MCF 10A (cell line): ENCODE measurements at regions of chr6 and their contacts with region 1.

Region 1: DNA sequence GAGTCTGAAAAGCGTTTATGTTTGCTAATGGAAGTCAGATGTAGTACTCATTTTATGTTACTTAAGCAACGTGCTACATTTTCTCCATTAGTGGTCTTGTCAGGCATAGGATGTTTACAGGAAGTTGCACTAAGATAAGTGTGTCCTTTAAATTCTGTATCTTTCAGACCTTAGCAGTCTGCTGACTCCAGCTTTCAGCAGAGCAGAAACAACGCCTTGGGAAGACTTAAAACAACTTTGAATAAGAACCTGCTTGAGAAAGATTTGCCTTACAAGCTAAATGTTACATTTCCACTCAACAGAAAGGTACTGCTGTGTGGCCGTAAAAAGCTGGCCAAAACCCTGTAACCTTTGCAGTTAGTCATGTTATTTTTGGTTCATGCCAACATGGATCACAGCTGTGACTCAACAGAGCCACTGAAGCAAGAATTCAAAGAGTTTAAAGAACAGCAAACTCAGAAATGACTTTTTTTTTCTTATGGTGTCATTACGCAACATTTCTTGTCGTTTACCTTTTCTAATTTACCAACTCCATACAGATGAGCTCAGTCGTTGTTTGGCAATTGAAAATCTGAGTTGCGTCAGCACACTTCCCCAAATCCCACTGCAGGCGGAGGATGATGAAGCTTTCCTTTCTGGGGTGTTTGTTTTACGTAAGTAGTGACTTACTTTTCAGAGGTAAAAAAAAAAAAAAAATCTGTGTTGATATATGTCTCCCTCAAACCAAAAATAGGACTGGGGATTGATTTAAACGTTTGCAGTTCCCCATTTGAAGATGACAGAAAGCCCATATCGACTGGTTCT is 27.9 kb upstream of the BMP6 start:
- DNase-seq: peak; percentile 96
- H3K4me3 Mint-ChIP-seq: peak overlapping the region; percentile 59
- H3K27ac Mint-ChIP-seq: peak overlapping the region; percentile 87
- H3K4me1 Mint-ChIP-seq: peaks cover 16% of the 10 kb centered on the region
- H3K27me3 Mint-ChIP-seq: no peaks in the 10 kb centered on the region
- CTCF ChIP-seq: no peak

Region 2: GRCh38 chr6:7505187-7505811 is 192.7 kb before region 1 on chr6:
- CTCF ChIA-PET with region 1: no interaction called
- POLR2A ChIA-PET with region 1: no interaction called
- intact Hi-C with region 1: no loop called
- DNase-seq: peak; percentile 99
- H3K4me3 Mint-ChIP-seq: peak overlapping the region; percentile 33
- H3K27ac Mint-ChIP-seq: peak overlapping the region; percentile 95
- H3K4me1 Mint-ChIP-seq: peaks cover 26% of the 10 kb centered on the region
- H3K27me3 Mint-ChIP-seq: no peaks in the 10 kb centered on the region
- CTCF ChIP-seq: no peak

Region 3: DNA sequence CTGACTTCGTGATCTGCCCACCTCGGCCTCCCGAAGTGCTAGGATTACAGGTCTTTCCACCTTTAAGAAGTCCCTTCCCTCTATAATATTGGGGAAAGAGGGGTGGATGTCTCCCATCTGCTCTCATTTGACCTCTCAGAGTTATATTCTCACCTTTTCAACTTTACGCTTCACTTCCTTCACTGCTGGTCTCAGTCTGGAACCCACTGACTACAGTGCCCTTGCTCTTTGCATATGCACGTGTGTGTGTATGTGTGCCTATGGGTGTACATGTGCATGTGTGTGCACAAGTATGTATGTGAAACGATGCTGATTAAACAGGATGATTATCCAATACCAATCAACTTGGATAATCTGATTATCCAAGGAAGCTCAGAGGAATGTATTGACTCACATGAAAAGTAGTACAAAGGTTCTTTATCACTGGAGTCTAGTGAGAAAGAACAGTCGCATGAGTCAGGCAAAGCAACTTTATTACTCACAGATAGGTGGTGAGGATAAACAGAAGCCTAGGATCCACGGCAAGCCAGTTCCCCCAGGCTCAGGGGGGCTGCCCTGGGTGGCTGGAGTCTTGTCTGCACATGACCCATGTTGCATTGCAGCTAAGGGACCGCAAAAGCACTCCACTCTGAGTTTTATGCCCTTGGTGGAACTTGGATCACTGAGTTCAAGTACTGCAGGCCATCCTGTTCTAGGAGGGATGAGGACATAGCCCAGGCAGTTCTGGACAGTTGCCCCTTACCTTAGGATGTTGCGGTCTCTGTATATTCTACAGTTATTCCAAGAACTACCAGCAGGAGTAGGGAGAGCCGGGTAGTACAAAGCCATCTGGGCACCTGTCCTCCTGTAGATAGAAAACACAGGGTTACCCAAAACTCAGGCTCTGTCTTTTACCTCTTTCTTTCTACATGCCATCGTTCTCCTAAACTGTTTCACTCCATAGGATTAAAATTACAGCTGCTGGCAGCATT is 57.1 kb before region 1 on chr6:
- CTCF ChIA-PET with region 1: interaction called, 4 read pairs
- POLR2A ChIA-PET with region 1: interaction called, 3 read pairs
- intact Hi-C with region 1: loop called (anchors 10 kb)
- DNase-seq: peak; percentile 52
- H3K4me3 Mint-ChIP-seq: no peak overlapping the region
- H3K27ac Mint-ChIP-seq: no peak overlapping the region
- H3K4me1 Mint-ChIP-seq: peaks cover 15% of the 10 kb centered on the region
- H3K27me3 Mint-ChIP-seq: no peaks in the 10 kb centered on the region
- CTCF ChIP-seq: no peak

Region 4: DNA sequence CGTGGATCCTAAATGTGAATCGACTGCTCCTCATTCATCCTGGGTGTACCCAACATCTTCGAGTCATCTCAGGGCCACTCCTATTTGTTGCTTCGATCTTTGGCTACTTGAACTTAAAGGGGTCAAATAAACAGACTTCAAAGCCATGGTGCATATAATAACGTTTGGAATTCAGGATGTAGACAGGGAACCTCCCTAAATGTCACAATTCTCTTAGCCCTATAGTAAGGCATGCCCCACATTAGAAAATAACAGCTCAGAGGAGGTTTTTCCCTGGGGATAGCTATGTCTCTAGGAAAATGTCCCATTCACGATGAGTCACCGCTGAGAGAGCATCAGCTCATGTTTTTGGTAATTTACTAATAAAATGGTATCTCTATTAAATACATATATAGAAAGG is 26.9 kb before region 1 on chr6:
- CTCF ChIA-PET with region 1: interaction called, 4 read pairs
- POLR2A ChIA-PET with region 1: interaction called, 10 read pairs
- intact Hi-C with region 1: no loop called
- DNase-seq: peak; percentile 61
- H3K4me3 Mint-ChIP-seq: no peak overlapping the region
- H3K27ac Mint-ChIP-seq: no peak overlapping the region
- H3K4me1 Mint-ChIP-seq: peaks cover 22% of the 10 kb centered on the region
- H3K27me3 Mint-ChIP-seq: no peaks in the 10 kb centered on the region
- CTCF ChIP-seq: no peak

Region 5: GRCh38 chr6:7794509-7794908 is 96.5 kb after region 1 on chr6:
- CTCF ChIA-PET with region 1: no interaction called
- POLR2A ChIA-PET with region 1: no interaction called
- intact Hi-C with region 1: no loop called
- DNase-seq: no peak
- H3K4me3 Mint-ChIP-seq: no peak overlapping the region
- H3K27ac Mint-ChIP-seq: no peak overlapping the region
- H3K4me1 Mint-ChIP-seq: no peaks in the 10 kb centered on the region
- H3K27me3 Mint-ChIP-seq: peaks cover 35% of the 10 kb centered on the region
- CTCF ChIP-seq: no peak

Region 6: GRCh38 chr6:7813704-7814103 is 115.7 kb after region 1 on chr6:
- CTCF ChIA-PET with region 1: no interaction called
- POLR2A ChIA-PET with region 1: no interaction called
- intact Hi-C with region 1: no loop called
- DNase-seq: no peak
- H3K4me3 Mint-ChIP-seq: no peak overlapping the region
- H3K27ac Mint-ChIP-seq: no peak overlapping the region
- H3K4me1 Mint-ChIP-seq: no peaks in the 10 kb centered on the region
- H3K27me3 Mint-ChIP-seq: no peaks in the 10 kb centered on the region
- CTCF ChIP-seq: no peak

Region 7: GRCh38 chr6:7939864-7940228 is 241.8 kb after region 1 on chr6:
- CTCF ChIA-PET with region 1: no interaction called
- POLR2A ChIA-PET with region 1: no interaction called
- intact Hi-C with region 1: no loop called
- DNase-seq: no peak
- H3K4me3 Mint-ChIP-seq: no peak overlapping the region
- H3K27ac Mint-ChIP-seq: peak overlapping the region; percentile 72
- H3K4me1 Mint-ChIP-seq: peaks cover 4% of the 10 kb centered on the region
- H3K27me3 Mint-ChIP-seq: no peaks in the 10 kb centered on the region
- CTCF ChIP-seq: no peak